ENCODE measurements at regions of chr2 and their contacts with region 1.

Region 1: DNA sequence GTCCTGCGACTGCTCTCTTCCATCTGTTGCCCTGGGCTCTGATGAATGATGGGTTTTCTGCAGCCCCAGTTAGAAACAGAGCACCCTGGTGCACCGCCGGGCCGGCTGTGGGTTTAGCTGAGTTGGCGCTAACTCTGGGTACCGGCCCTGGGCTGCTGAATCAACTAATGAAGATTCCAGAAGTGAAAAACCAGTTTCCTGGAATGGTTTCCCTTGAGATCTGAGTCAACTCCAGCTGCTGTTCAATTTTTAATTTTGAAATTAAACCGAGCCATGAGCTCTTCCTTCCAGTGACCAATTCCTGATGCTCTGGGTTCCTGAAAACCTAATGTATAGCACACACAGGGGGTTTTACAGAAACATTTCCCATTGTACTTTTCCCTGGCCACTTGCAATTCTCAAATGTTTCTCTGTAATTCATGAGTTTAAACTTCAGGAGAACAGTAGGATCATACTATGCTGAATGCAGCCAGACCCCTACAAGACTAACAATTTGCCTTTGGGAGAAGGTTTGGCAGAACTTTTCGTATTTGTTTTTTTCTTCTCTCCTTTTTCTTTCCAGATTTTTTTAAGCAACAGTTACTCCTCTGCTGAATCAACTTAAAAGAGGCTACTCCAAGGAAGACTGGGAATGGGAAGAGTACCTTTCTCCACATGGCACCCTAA is 5.5 kb downstream of the COL6A3 start:
- DNase-seq: peak; percentile 57 to 84 (median 80)
- ATAC-seq: peak; percentile 42 to 54
- H3K4me3 ChIP-seq: no peak overlapping the region
- H3K27ac ChIP-seq: peak overlapping the region; percentile 59
- H3K4me1 ChIP-seq: no peaks in the 10 kb centered on the region
- H3K27me3 ChIP-seq: no peaks in the 10 kb centered on the region

Region 2: DNA sequence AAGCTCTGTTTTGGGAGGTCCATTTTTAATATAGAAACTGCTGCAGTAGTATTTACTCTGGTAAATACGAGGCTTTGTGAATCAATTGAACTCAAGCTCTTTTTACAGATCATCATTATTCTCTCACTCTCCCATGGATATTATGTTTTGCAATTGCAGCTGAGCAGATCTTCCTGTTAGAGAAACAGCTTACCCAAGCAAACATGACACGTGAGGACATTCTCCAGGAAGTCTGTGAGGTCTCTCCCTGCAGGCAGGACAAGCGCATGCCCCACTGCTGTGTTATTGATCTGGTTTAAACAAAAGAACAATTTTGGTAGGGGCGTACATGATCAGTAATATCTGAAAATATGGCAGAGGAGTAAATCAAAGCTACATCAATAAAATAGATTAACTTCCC is 66.6 kb before region 1 on chr2:
- intact Hi-C with region 1: loop called in 1 of 4 experiments (anchors 10 kb)
- DNase-seq: no peak
- ATAC-seq: no peak
- H3K4me3 ChIP-seq: no peak overlapping the region
- H3K27ac ChIP-seq: no peak overlapping the region
- H3K4me1 ChIP-seq: no peaks in the 10 kb centered on the region
- H3K27me3 ChIP-seq: no peaks in the 10 kb centered on the region